ENCODE measurements at regions of chr5 and their contacts with region 1.

Region 1: GRCh38 chr5:150175076-150175935 is 8.7 kb downstream of the CDX1 start:
- DNase-seq: no peak
- ATAC-seq: peak; percentile 61
- H3K4me3 Mint-ChIP-seq: no peak overlapping the region
- H3K27ac Mint-ChIP-seq: no peak overlapping the region
- H3K4me1 Mint-ChIP-seq: no peaks in the 10 kb centered on the region
- H3K27me3 Mint-ChIP-seq: peaks cover 38% of the 10 kb centered on the region

Region 2: DNA sequence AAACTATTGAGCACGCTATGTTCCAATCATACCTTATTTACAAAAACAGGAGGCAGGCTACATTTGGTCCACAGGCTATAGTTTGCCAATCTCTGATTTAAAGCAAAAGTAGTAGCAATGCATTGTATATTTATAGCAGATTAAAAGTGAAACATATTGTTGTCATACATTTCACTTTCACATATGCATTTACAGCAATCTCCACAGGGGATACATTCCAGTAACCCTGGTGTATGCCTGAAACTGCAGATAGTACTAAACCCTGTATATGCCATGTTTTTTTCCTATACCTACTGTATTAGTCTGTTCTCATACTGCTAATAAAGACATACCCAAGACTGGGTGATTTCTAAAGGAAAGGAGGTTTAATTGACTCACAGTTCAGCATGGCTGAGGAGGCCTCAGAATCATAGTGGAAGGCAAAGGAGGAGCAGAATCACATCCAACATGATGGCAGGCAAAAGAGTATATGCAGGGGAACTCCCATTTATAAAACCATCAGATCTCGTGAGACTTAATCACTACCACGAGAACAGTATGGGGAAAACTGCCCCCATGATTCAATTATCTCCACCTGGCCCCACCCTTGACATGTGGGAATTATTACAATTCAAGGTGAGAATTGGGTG is 83.0 kb before region 1 on chr5:
- CTCF ChIA-PET with region 1: no interaction called
- DNase-seq: no peak
- ATAC-seq: peak; percentile 39
- H3K4me3 Mint-ChIP-seq: no peak overlapping the region
- H3K27ac Mint-ChIP-seq: no peak overlapping the region
- H3K4me1 Mint-ChIP-seq: peaks cover 8% of the 10 kb centered on the region
- H3K27me3 Mint-ChIP-seq: peaks cover 60% of the 10 kb centered on the region

Region 3: GRCh38 chr5:150155258-150156026 is 19.9 kb before region 1 on chr5 and contains the start of gene PDGFRB:
- CTCF ChIA-PET with region 1: interaction called, 11 read pairs
- DNase-seq: peak; percentile 88
- ATAC-seq: peak; percentile 83
- H3K4me3 Mint-ChIP-seq: peak within 1 kb of the TSS; percentile 88
- H3K27ac Mint-ChIP-seq: peak within 1 kb of the TSS; percentile 86
- H3K4me1 Mint-ChIP-seq: peaks cover 51% of the 10 kb centered on the region
- H3K27me3 Mint-ChIP-seq: peaks cover 11% of the 10 kb centered on the region
- total RNA-seq, gene PDGFRB: 53.3 to 68.9 TPM

Region 4: DNA sequence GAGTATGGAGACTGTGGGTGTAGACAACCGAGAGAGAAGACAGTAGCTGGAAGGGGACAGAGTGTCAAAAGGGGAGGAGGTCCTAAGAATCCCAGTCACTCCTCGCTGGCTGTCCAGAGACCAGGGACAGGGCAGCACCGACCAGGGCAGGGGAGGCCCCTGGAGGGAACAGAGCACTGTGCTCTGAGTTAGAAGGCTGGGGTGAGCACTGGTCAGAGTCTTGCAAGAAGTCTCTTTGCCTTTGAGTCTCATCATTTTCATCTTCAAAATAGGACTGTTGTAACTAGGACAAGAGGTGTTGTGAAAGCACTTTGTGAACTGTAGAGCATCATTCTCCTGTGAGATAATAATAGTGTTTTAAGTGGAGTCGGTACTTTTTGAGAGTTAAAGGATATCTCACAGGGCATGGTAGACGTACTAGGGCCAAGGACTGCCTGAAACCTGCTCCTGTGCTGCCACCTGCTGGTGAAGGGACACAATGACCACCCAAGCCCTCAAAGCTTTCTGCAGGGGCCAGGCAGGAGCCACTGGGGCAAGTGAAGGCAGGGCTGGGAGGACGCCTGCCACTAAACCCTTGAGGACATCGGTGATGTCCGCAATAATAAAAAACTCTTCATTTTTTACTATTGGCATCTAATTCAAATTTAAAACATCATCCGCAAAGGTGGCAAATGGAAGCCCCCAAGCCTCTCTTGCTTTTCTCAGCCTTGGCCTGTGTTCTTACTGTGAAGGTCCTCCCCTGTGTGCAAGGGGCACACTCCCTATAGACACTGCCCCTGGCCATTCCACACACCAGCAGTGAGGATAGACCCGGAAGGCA is 42.8 kb after region 1 on chr5:
- CTCF ChIA-PET with region 1: interaction called, 13 read pairs
- DNase-seq: peak; percentile 90
- ATAC-seq: peak; percentile 98
- H3K4me3 Mint-ChIP-seq: no peak overlapping the region
- H3K27ac Mint-ChIP-seq: no peak overlapping the region
- H3K4me1 Mint-ChIP-seq: no peaks in the 10 kb centered on the region
- H3K27me3 Mint-ChIP-seq: peaks cover 30% of the 10 kb centered on the region

Region 5: DNA sequence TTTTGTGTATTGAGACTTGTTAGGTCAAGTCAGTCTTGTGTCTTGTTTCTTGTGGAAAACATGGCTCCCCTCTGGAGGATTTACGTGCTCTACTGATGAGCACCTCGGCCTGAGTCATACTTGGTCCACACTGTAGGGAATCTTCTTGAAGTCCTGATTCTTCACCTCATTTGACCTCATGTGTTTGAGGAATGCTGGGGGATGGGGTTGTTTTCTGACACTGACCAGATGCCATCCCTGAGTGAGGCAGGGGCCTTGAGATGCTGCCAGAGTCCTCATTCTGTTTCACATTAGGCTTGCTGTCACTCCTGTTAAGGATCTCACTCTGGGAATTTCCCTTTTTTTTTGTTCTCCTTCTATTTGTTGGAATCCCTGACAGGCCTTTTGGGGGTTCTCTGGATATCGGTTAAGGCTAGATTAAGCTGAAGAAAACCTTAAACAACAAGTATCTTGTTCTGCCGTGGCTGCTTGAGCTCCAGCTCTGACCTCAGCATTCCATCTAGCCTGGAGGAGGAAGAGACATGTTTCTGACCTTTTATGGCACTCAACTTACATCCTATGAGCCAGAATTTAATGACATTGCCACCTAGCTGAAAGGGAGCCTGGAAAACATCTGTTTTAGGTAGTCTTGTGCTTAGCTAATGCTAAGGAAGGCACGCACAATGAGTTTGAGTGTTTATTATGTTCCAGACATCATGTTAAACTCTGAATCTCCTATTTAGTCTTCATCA is 202.8 kb after region 1 on chr5:
- CTCF ChIA-PET with region 1: no interaction called
- DNase-seq: no peak
- ATAC-seq: no peak
- H3K4me3 Mint-ChIP-seq: no peak overlapping the region
- H3K27ac Mint-ChIP-seq: peak overlapping the region; percentile 44
- H3K4me1 Mint-ChIP-seq: peaks cover 8% of the 10 kb centered on the region
- H3K27me3 Mint-ChIP-seq: no peaks in the 10 kb centered on the region